Colonic mucosa (tissue), 4 donors: ENCODE measurements at regions of chr3 and their contacts with region 1.

Region 1: DNA sequence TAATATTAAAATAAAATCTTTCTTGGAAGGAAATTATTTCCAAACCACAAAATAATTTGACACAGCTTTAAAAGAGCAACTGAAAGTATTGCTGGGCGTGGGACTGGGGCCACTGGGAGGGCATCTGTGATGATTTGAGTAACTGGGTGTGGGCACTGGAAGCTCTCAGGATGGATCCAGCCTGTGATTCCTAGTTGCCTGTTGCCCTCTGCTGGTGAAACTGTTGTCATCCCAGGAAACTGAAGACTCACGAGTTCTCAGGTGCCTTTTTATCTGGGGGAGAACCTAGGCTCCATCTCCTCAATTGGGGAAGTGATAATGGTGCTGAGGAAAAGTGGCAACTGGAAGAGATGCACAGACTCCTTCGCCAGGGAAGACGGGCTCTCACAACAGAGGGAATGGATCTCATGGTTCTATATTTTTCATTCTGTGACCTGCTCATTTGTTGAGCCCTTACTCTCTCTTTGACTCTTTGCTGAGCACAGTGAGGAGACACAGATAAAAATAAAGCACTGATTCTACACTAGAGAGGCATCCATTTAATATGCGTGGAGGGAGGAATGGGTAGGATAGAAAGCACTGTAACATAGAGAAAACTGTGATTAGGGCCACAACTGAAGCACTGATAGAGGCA is 61.6 kb downstream of the TPRG1 start:
- DNase-seq: peak; percentile 79
- H3K4me3 ChIP-seq: no peak overlapping the region
- H3K27ac ChIP-seq: no peak overlapping the region
- H3K4me1 ChIP-seq: no peaks in the 10 kb centered on the region
- H3K27me3 ChIP-seq: no peaks in the 10 kb centered on the region
- CTCF ChIP-seq: peak; percentile 42

Region 2: DNA sequence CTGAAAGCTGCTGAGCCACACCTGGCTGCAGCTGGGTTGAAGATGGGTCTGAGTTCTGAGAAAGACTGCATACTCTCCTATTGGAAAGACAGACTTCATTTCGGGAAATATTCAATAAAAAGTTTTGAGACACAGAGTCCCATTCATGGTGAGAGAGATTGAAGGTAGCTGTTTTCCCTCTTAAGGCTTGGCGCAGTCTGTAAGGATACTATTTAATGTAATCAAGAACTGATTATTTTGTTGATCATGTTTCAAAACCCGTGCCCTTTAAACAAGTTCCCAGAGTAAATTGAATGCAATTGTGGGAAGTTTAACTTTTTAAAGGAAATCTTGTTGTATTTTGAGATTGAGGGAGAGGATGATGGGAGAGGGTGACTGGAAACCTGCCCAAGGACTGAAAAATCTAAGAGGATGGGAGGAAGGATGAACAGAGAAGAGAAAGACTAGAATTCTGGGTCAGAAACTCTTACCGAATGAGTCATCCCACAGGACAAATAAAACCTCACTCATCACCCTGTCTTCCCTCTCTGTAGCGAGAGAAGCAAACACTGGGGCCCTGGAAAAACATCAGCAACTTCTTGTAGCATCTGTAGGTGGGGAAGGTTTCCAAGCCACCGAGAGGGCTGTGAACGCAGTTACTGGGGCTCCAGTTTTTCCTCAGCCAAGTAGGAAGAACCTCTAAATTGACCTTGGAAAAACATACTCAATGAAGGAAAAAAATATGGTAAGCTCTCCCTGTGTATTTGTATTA is 254.7 kb before region 1 on chr3:
- intact Hi-C with region 1: loop called (anchors 10 kb)
- DNase-seq: no peak
- H3K4me3 ChIP-seq: no peak overlapping the region
- H3K27ac ChIP-seq: no peak overlapping the region
- H3K4me1 ChIP-seq: no peaks in the 10 kb centered on the region
- H3K27me3 ChIP-seq: no peaks in the 10 kb centered on the region
- CTCF ChIP-seq: no peak

Region 3: DNA sequence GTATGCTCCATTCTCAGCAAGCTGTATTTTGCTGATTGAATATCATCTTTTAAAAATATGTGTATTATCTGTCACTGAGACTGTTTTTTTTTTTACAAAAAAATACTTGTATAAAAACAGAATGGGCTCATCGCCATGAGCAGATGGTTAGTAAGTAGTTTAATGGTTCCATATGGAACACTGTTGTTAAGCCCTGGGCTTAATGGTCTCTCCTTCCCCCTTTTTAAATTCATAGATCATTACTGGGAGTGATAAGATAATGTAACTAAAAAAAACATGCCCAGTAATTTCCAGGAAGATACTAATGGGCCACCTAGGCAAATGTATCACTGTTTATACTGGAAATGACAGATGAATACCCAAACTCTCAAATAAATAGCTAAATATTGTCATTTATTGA is 156.9 kb before region 1 on chr3:
- intact Hi-C with region 1: no loop called
- DNase-seq: no peak
- H3K4me3 ChIP-seq: no peak overlapping the region
- H3K27ac ChIP-seq: no peak overlapping the region
- H3K4me1 ChIP-seq: no peaks in the 10 kb centered on the region
- H3K27me3 ChIP-seq: no peaks in the 10 kb centered on the region
- CTCF ChIP-seq: no peak

Region 4: GRCh38 chr3:189148081-189148507 is 85.2 kb before region 1 on chr3:
- intact Hi-C with region 1: loop called (anchors 5 kb)
- DNase-seq: peak; percentile 76
- H3K4me3 ChIP-seq: no peak overlapping the region
- H3K27ac ChIP-seq: no peak overlapping the region
- H3K4me1 ChIP-seq: no peaks in the 10 kb centered on the region
- H3K27me3 ChIP-seq: no peaks in the 10 kb centered on the region
- CTCF ChIP-seq: peak; percentile 65

Region 5: GRCh38 chr3:189673535-189673934 is 440.2 kb after region 1 on chr3:
- intact Hi-C with region 1: no loop called
- DNase-seq: no peak
- H3K4me3 ChIP-seq: no peak overlapping the region
- H3K27ac ChIP-seq: no peak overlapping the region
- H3K4me1 ChIP-seq: no peaks in the 10 kb centered on the region
- H3K27me3 ChIP-seq: no peaks in the 10 kb centered on the region
- CTCF ChIP-seq: no peak